ENCODE measurements at regions of chrX and their contacts with region 1.

Region 1: GRCh38 chrX:136909706-136910564 is 29.4 kb upstream of the RBMX start:
- DNase-seq: peak; percentile 89
- H3K4me3 Mint-ChIP-seq: peak overlapping the region; percentile 96
- H3K27ac Mint-ChIP-seq: peak overlapping the region; percentile 94
- H3K4me1 Mint-ChIP-seq: peaks cover 13% of the 10 kb centered on the region
- H3K27me3 Mint-ChIP-seq: no peaks in the 10 kb centered on the region

Region 2: DNA sequence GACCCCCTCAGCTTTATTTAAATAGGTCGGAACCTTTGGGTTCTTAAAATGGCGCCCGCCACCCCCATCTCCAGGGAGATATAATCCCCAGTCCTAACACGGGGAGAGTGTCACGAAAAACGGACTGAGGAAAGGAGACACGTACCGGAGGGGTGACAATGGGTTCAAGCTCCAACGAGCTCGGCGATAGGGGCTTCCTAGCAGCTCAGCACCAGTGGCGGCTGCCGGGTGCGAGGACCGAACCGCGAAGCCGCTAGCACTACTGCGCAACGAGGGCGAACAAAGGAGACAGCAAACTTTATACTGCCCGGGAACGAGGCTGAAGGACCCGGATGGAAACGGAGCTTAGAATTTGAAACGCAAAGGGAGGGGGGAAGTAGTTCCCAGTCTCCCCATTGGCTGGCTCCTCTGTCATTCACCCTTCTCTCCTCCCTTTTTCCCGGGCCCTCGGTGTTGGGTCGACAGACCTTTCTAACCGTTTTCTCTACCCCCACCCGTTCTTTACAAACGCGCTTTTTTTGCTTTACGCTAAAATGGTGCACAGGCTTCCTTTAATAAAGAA is 29.4 kb before region 1 on chrX and contains the start of gene RBMX:
- intact Hi-C with region 1: loop called (anchors 1 kb)
- DNase-seq: peak; percentile 96
- H3K4me3 Mint-ChIP-seq: peak within 1 kb of the TSS; percentile 97
- H3K27ac Mint-ChIP-seq: peak within 1 kb of the TSS; percentile 99
- H3K4me1 Mint-ChIP-seq: peaks cover 2% of the 10 kb centered on the region
- H3K27me3 Mint-ChIP-seq: no peaks in the 10 kb centered on the region
- total RNA-seq, gene RBMX: 324 and 334 TPM in 2 replicates